Activated T-helper 1 cell treated with anti-CD3 and anti-CD28 coated beads, Interleukin-12 subunit alpha, Interleukin-12 subunit beta, Interleukin-2, Interleukin-4 antibody, amounts not matched to agents 30 ng/mL and 10 ng/mL and 1 ng/mL, durations not matched to agents 14 hours and 24 hours and 36 hours (primary cell): ENCODE measurements at regions of chr9 and their contacts with region 1.

Region 1: DNA sequence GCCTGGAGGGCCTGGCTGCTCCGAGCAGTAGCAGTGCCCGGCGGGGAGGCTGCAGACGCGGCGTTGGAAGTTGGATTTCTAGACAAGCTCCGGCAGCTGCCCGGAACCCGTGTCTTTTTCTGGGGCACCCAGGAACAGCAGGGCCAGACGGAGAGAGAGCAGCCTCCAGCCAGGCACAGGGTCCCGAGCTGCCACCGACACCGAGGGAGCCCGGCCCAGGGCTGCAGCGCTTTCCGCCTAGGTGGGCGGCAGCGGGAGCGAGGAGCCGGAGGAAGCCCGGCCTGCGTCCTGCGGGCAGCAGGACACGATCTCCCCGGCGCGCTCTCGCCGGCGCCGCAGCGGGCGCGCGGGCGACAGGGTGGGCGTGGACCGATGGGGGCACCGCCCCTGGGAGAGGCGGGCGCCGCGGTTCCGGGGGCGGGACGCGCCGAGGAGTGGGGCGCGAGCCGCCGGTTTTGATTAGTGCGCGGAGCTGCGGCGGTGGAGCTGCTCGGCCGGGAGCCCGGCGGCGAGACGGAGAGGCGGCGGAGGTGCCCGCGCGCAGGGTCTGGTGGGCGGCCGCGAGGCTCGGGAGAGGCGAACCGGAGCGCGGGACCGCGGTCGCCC is at the start of gene UGCG:
- DNase-seq: peak; percentile 86
- H3K4me3 Mint-ChIP-seq: peak within 1 kb of the TSS; percentile 90
- H3K27ac Mint-ChIP-seq: peak within 1 kb of the TSS; percentile 87
- H3K4me1 Mint-ChIP-seq: peaks cover 19% of the 10 kb centered on the region
- H3K27me3 Mint-ChIP-seq: peaks cover 4% of the 10 kb centered on the region
- total RNA-seq, gene UGCG: 22.6 and 22.9 TPM in 2 replicates

Region 2: DNA sequence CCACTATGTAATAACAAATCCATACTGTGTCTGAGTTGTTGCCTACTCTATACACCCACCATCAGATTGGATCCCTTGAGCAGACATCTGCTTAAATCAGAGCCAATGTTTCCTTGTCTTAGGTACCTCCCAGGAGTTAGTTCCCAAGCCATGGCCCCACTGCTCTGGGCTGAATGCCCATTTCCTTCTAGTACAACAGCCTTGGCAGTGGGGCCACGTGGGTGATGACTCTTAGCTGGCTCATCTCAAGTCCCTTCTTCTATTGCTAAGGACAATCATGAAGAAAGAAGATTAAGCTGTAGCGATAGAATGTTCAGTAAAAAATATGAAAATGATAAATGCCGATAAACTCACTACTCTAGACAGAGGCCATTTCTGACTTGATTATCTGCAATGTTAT is 313.6 kb before region 1 on chr9:
- intact Hi-C with region 1: no loop called
- DNase-seq: no peak
- H3K4me3 Mint-ChIP-seq: no peak overlapping the region
- H3K27ac Mint-ChIP-seq: no peak overlapping the region
- H3K4me1 Mint-ChIP-seq: no peaks in the 10 kb centered on the region
- H3K27me3 Mint-ChIP-seq: peaks cover 3% of the 10 kb centered on the region

Region 3: DNA sequence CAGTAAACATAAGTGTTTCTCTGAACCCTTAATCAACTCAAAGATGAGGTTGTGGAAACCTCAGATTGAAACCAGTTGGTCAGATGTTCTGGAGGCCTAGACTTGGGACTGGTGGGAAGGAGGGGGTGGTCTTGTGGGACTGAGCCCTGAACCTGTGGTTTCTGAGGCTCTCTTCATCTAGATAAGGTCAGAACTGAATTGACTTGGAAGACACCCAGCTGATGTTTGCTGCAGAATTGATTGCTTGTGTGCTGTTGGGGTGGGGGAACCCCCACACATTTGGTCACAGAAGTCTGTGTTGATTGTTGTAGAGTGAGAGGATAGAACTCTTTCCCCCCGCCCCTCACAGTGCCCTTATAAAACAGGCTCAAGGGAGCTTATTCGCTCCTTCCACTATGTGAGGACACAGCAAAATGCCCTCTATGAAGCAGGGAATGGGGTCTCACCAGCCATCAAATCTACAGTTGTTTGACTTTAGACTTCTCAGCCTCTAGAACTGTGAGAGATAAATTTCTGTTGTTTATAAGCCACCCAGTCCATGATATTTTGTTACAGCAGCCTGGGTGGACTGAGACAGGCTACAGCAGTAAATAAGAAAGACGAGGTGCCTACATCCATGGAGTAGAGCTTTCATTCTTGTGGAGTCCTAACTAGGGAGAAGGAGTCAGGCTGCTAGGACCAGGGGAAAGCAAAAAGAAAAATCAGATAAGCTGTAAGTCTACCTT is 25.5 kb before region 1 on chr9:
- intact Hi-C with region 1: loop called (anchors 1 kb)
- DNase-seq: peak; percentile 6
- H3K4me3 Mint-ChIP-seq: no peak overlapping the region
- H3K27ac Mint-ChIP-seq: peak overlapping the region; percentile 49
- H3K4me1 Mint-ChIP-seq: peaks cover 20% of the 10 kb centered on the region
- H3K27me3 Mint-ChIP-seq: peaks cover 30% of the 10 kb centered on the region

Region 4: DNA sequence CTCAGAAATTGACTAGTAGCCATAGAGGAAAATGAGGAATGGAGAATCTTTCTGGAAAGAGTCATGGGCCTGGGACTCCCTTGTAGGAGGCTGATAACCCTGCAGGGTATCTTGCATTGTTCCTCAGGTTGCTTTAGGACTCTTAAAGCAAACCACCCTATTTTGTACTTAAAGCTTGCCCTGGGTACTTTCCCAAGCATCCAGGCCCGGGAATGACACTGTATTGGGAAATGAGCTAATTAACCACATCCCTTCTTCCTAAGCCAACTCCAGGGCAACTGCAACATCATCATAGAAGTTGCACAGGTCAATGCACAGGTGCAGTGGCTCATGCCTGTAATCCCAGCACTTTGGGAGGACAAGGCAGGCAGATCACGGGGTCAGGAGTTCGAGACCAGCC is 56.1 kb after region 1 on chr9:
- intact Hi-C with region 1: no loop called
- DNase-seq: no peak
- H3K4me3 Mint-ChIP-seq: no peak overlapping the region
- H3K27ac Mint-ChIP-seq: no peak overlapping the region
- H3K4me1 Mint-ChIP-seq: peaks cover 2% of the 10 kb centered on the region
- H3K27me3 Mint-ChIP-seq: peaks cover 16% of the 10 kb centered on the region

Region 5: GRCh38 chr9:111965566-111966019 is 69.1 kb after region 1 on chr9:
- intact Hi-C with region 1: loop called (anchors 1 kb)
- DNase-seq: no peak
- H3K4me3 Mint-ChIP-seq: no peak overlapping the region
- H3K27ac Mint-ChIP-seq: peak overlapping the region; percentile 65
- H3K4me1 Mint-ChIP-seq: peaks cover 7% of the 10 kb centered on the region
- H3K27me3 Mint-ChIP-seq: peaks cover 12% of the 10 kb centered on the region

Region 6: DNA sequence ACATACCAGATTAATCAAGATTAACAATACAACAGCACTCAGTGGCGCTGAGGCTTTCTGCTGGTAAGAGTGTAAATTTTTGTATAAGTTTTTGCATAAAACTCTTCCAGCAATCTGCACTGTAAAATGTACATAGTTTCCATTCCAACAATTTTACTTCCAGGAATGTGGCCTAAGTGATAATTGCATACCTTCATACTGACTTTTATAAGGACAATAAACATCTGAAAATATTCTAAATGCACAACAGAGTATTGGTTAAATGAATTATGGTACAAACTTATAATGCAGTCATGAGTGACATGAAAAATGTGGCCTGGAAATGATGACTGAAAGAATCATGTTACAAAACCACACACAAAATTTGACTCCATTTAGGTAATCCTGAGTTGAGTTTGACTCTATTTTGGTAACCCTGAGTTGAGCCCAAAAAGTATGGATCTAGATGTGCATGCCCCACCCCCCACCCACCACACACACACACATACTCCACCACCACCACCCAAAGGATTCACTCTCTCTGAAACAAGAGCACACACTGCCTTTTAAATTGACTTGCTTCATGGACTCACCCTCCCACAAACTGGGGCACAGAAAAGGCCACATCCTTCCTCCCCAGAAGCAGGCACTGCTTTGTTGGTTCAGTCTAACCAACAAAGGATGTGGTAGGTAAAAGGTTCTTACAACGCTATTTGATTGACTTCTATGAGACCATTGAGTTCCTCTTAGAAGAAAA is 141.0 kb after region 1 on chr9:
- intact Hi-C with region 1: loop called (anchors 1 kb)
- DNase-seq: peak; percentile 74
- H3K4me3 Mint-ChIP-seq: peak overlapping the region; percentile 43
- H3K27ac Mint-ChIP-seq: peak overlapping the region; percentile 82
- H3K4me1 Mint-ChIP-seq: peaks cover 53% of the 10 kb centered on the region
- H3K27me3 Mint-ChIP-seq: peaks cover 16% of the 10 kb centered on the region

Region 7: DNA sequence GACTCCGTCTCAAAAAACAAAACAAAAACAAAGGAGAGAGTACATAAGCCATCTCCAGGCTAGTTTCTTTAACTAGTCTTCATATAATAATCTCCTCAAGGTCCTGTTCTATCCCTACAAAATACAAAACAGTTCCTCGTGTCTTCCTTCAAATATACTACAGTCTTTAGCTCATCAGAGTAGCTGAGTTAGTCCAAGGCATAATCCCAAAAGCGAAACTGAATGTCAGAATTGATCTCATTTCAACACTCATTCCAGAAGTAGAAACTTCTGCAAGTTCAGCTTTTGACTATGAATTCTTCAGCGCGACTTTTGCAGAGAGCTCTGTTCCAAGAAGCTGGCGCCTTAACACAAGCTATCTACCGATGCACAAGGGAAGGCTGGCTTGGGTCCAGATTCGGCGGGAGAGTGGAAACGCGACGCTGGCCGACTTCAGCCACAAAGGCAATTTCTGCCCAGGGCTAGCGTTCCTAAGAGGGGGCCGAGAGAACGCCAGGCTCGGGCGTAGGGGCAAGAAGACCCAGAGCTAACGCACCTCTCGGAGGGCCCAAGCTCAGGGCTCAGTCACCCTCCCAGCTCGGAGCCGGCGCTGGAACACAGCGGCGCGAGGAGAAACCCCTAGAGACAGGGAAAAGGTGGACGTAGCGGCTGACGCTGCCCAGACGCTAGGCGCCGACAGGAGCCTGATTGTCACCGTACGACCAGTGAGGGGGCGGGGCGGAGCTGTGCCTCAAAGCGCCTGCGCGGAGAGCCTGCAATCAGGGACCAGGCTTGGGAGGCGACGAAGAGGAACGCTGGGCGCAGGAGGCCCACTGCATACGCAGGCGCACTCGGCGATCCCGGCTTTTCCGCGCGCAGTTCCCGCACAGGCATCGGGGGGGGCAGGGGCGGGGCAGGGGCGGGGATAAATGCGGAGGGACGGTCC is 483.0 kb after region 1 on chr9:
- intact Hi-C with region 1: loop called (anchors 5 kb)
- DNase-seq: peak; percentile 97
- H3K4me3 Mint-ChIP-seq: peak overlapping the region; percentile 98
- H3K27ac Mint-ChIP-seq: peak overlapping the region; percentile 99
- H3K4me1 Mint-ChIP-seq: peaks cover 52% of the 10 kb centered on the region
- H3K27me3 Mint-ChIP-seq: no peaks in the 10 kb centered on the region

Region 8: DNA sequence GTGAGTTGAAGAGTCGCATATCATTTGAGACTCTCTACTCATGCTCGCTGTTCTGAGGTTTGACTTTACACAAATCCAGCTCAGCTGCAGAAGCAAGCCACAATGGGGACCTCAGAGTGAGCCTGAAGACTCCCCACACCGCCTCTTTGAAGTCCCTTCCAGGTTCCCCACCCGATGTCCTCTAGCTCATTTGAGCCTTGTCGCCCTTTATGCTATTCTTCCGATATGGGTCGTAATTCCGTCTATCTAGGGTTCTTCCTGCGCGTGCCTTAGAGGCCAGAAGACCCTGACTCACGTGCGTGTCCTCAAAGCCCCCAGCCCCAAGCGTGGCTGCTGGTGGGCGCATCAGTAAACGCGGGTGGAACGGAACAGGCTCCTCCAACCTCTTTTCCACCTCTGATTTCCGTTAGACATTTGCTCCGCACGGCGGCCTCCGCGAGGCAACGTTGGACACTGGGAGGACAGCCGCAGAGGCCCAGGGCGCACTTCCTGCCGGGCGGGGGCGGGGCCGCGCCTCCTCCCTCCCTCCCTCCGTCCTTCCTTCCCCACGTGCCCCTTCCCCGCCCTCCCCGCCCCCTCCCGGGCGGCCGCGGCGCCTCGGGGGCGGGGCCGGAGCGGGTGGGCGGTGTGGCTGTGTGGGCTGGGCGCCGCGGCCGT is 853.8 kb after region 1 on chr9 and contains the start of gene SNX30:
- intact Hi-C with region 1: loop called (anchors 2 kb)
- DNase-seq: peak; percentile 78
- H3K4me3 Mint-ChIP-seq: peak within 1 kb of the TSS; percentile 86
- H3K27ac Mint-ChIP-seq: peak within 1 kb of the TSS; percentile 88
- H3K4me1 Mint-ChIP-seq: peaks cover 67% of the 10 kb centered on the region
- H3K27me3 Mint-ChIP-seq: peaks cover 5% of the 10 kb centered on the region
- total RNA-seq, gene SNX30: 1.9 and 2.1 TPM in 2 replicates